ENCODE measurements at regions of chr18 and their contacts with region 1.

Region 1: GRCh38 chr18:38413193-38413592 is 847.6 kb upstream of the CELF4 start:
- DNase-seq: no peak
- ATAC-seq: no peak

Region 2: DNA sequence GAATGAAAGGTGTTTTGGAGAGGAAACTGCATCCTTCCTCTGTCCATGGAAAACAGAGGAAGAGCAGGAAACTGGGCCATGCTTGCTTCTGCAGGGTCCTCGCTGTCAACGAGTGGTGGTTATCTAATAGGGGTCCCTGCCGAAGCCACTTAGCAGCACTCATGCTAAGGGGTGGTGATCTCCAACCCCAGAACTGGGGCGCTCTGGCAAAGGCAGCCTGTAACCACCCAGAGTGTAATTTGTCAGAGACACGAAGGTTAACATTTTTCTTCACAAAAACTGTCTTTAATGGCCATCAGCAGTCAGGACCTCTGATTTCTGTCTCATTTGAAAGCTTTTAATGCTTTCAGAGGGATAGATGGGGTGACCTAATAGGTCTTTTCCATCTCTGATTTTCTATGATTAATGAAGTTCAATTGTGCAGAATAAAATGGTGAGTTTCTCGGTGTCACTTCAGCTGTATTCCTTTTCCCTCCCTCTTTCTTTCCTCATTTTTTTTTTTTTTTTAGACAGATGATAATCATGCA is 616.3 kb before region 1 on chr18:
- intact Hi-C with region 1: no loop called
- DNase-seq: no peak
- ATAC-seq: no peak

Region 3: GRCh38 chr18:38358805-38359657 is 54.2 kb before region 1 on chr18:
- intact Hi-C with region 1: loop called in 1 of 2 experiments (anchors 10 kb)
- DNase-seq: no peak
- ATAC-seq: no peak

Measured in left cardiac atrium (tissue), 4 donors.